ENCODE measurements at regions of chr12 and their contacts with region 1.

Region 1: GRCh38 chr12:1117970-1118563 is 127.0 kb downstream of the ERC1 start:
- DNase-seq: peak in 2 of 3 donors; percentile 66 to 83
- ATAC-seq: peak; percentile 97
- H3K4me3 ChIP-seq: no peak overlapping the region
- H3K4me1 ChIP-seq: no peaks in the 10 kb centered on the region
- CTCF ChIP-seq: peak; percentile 92

Region 2: DNA sequence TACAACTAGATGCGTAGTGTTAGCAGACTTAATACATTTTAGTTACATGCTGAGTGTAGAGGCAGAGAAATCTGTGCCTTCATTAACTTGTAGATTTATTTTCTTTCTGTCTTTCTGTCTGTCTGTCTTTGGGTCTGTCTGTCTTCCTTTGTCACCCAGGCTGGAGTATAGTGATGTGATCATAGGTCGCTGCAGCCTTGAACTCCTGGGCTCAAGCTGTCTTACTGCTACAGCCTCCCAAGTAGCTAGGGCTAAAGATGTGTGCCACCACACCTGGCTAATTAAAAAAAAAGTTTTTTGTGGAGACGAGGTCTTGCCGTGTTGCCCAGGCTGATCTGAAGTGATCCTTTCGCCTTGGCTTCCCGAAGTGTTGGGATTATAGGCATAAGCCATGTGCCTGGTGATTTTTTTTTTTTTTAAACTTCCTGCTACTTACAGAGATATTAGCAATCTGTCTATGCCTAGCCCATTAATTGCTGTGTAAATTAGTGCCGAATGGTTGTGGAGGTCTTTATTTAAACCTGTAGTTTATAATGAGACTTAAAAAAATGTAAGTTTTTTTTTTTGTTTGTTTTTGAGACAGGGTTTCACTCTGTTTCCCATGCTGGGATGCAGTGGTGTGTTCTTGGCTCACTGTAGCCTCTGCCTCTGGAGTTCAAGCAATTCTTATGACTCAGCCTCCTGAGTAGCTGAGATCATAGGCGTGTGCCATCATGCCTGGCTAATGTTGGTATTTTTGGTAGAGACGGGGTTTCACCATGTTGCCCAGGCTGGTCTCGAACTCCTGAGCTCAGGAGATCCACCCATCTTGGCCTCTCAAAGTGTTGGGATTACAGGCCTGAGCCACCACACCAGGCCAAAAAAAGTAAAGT is 104.2 kb before region 1 on chr12:
- intact Hi-C with region 1: no loop called
- DNase-seq: no peak
- ATAC-seq: peak; percentile 30
- H3K4me3 ChIP-seq: no peak overlapping the region
- H3K4me1 ChIP-seq: no peaks in the 10 kb centered on the region
- CTCF ChIP-seq: no peak

Region 3: GRCh38 chr12:1583421-1584078 is 465.5 kb after region 1 on chr12:
- intact Hi-C with region 1: loop called (anchors 5 to 10 kb)
- DNase-seq: peak in 1 of 3 donors; percentile 89
- ATAC-seq: peak; percentile 91
- H3K4me3 ChIP-seq: no peak overlapping the region
- H3K4me1 ChIP-seq: peaks cover 45% of the 10 kb centered on the region
- CTCF ChIP-seq: peak; percentile 59